Naive thymus-derived CD4-positive, alpha-beta T cell (primary cell): ENCODE measurements at regions of chr11 and their contacts with region 1.

Region 1: DNA sequence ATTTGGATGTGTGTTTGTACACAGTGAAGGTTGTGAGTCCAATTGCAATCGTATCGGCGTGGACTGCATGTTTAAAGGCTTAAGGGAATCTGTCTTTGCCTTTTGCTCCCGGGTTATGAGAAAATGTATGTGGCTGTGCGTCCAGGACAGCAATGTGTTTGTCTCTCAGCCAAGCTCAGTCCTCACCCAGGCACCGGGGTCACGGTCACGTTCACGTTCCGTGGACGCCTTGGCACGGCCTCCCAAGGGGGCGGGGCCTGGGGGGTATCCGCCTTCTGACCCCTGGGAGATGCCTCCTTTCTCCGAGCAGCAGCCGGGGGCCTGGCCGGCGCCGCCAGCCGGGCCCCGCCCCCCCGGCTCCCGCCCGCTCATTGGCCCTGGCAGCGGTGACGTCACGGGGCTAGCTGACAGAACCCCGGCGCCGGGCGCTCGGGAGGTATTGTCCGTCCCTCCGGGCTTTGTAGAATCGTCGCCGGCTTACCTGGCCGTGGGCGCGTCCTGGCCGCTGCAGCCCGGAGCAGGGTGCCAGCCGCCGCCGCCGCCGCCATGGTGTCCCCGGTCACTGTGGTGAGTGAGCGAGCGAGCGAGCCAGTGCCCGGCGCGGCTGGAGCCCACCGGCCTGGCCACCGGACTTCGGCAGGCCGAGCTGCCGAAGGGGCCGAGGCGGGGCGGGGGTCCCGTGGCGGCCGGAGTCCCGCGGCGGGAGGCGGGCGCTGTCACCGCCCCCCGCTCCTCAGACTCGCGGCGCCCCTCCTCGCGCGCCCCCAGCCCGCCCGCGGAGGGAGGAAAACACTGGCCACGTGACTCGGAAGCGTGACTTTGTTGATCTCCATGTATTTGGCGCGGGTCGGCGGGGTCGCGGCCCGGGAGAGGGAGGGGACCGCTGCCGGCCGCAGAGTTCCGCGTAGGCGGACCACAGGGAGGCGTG is at the start of gene TMEM86A:
- DNase-seq: peak; percentile 81 to 89 (median 87)
- ATAC-seq: peak; percentile 97
- H3K4me3 ChIP-seq: peak within 1 kb of the TSS; percentile 42
- H3K4me3 Mint-ChIP-seq: peak within 1 kb of the TSS; percentile 76 to 89 (median 84)
- H3K27ac ChIP-seq: peak within 1 kb of the TSS; percentile 72
- H3K27ac Mint-ChIP-seq: peak within 1 kb of the TSS; percentile 42 to 95 (median 89)
- H3K4me1 ChIP-seq: peaks cover 6% of the 10 kb centered on the region in 2 donors
- H3K4me1 Mint-ChIP-seq: peaks cover 14 to 27% (median 20%) of the 10 kb centered on the region in 7 donors
- H3K27me3 ChIP-seq: no peaks in the 10 kb centered on the region
- H3K27me3 Mint-ChIP-seq: peaks cover 0 to 39% (median 0%) of the 10 kb centered on the region in 5 donors
- total RNA-seq, gene TMEM86A: 0.53 to 6.5 (median 5.5) TPM

Region 2: GRCh38 chr11:18191376-18191775 is 507.2 kb before region 1 on chr11:
- CTCF ChIA-PET with region 1: no interaction called
- POLR2A ChIA-PET with region 1: no interaction called
- intact Hi-C with region 1: no loop called
- DNase-seq: no peak
- ATAC-seq: no peak
- H3K4me3 ChIP-seq: no peak overlapping the region
- H3K4me3 Mint-ChIP-seq: no peak overlapping the region
- H3K27ac ChIP-seq: no peak overlapping the region
- H3K27ac Mint-ChIP-seq: no peak overlapping the region
- H3K4me1 ChIP-seq: no peaks in the 10 kb centered on the region
- H3K4me1 Mint-ChIP-seq: no peaks in the 10 kb centered on the region
- H3K27me3 ChIP-seq: peaks cover 0 to 3% of the 10 kb centered on the region in 2 donors
- H3K27me3 Mint-ChIP-seq: peaks cover 10 to 24% (median 19%) of the 10 kb centered on the region in 5 donors

Region 3: GRCh38 chr11:18650859-18651557 is 47.6 kb before region 1 on chr11:
- CTCF ChIA-PET with region 1: no interaction called
- POLR2A ChIA-PET with region 1: no interaction called
- intact Hi-C with region 1: loop called in 1 of 2 experiments (anchors 5 kb)
- DNase-seq: peak in 5 of 9 donors; percentile 11 to 37 (median 20)
- ATAC-seq: peak; percentile 73
- H3K4me3 ChIP-seq: no peak overlapping the region
- H3K4me3 Mint-ChIP-seq: no peak overlapping the region
- H3K27ac ChIP-seq: no peak overlapping the region
- H3K27ac Mint-ChIP-seq: peak overlapping the region in 1 of 9 donors; percentile 30
- H3K4me1 ChIP-seq: no peaks in the 10 kb centered on the region
- H3K4me1 Mint-ChIP-seq: peaks cover 0 to 15% (median 0%) of the 10 kb centered on the region in 7 donors
- H3K27me3 ChIP-seq: no peaks in the 10 kb centered on the region
- H3K27me3 Mint-ChIP-seq: no peaks in the 10 kb centered on the region